Activated B cell treated with CpG ODN at 0.5 μM for 24 hours (primary cell): ENCODE measurements at regions of chr9 and their contacts with region 1.

Region 1: GRCh38 chr9:124708633-124709291 is 62.3 kb downstream of the NR6A1 start:
- DNase-seq: no peak
- ATAC-seq: no peak
- H3K4me3 Mint-ChIP-seq: no peak overlapping the region
- H3K27ac Mint-ChIP-seq: no peak overlapping the region
- H3K4me1 Mint-ChIP-seq: no peaks in the 10 kb centered on the region
- H3K27me3 Mint-ChIP-seq: no peaks in the 10 kb centered on the region
- CTCF ChIP-seq: no peak

Region 2: DNA sequence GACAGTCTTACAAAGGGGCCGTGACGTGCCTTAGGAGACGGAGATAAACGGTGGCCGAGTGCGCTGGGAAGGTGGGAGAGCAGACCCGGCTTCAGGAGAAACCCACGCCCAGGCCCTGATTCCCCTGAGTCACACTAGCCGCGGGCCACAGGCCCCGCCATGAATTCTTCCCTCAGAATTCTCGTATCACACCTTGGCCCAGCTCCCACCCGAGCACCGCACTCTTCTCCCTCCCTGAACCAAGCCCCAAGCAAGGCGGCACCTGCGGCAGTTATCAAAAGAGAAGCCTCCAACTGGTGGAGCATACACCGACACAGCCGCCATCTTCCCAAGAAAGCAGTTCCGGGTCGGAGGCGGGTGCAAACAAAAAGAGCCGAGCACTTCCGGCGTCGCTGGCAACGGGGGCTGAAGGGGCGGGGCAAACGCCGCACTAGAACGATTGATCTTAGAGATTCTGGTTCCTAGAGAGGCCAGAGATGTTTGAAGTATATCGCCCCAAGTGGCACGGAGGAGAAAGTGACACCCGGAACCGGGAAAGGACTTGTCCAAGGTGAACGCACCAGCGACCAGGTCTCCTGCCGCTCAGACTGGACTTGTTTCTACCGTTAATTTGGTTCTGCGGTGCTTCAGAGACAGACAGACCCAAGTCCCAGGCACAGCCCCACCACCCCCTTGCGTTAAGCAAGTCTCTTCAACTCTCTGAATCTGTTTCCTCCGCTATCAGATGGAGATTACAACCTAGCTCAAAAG is 293.5 kb before region 1 on chr9 and contains the start of gene PSMB7:
- CTCF ChIA-PET with region 1: no interaction called
- POLR2A ChIA-PET with region 1: no interaction called
- intact Hi-C with region 1: loop called (anchors 1 kb)
- DNase-seq: peak; percentile 91
- ATAC-seq: peak; percentile 94
- H3K4me3 Mint-ChIP-seq: peak within 1 kb of the TSS; percentile 99
- H3K27ac Mint-ChIP-seq: peak within 1 kb of the TSS; percentile 94
- H3K4me1 Mint-ChIP-seq: peaks cover 25% of the 10 kb centered on the region
- H3K27me3 Mint-ChIP-seq: no peaks in the 10 kb centered on the region
- CTCF ChIP-seq: peak; percentile 38
- total RNA-seq, gene PSMB7: 120 and 140 TPM in 2 replicates

Region 3: GRCh38 chr9:124617471-124618141 is 91.2 kb before region 1 on chr9:
- CTCF ChIA-PET with region 1: interaction called, 74 read pairs
- POLR2A ChIA-PET with region 1: no interaction called
- intact Hi-C with region 1: loop called (anchors 1 kb)
- DNase-seq: peak; percentile 47
- ATAC-seq: peak; percentile 75
- H3K4me3 Mint-ChIP-seq: no peak overlapping the region
- H3K27ac Mint-ChIP-seq: no peak overlapping the region
- H3K4me1 Mint-ChIP-seq: peaks cover 2% of the 10 kb centered on the region
- H3K27me3 Mint-ChIP-seq: no peaks in the 10 kb centered on the region
- CTCF ChIP-seq: peak; percentile 41

Region 4: GRCh38 chr9:124894741-124895170 is 186.0 kb after region 1 on chr9:
- CTCF ChIA-PET with region 1: no interaction called
- POLR2A ChIA-PET with region 1: no interaction called
- intact Hi-C with region 1: loop called (anchors 2 kb)
- DNase-seq: no peak
- ATAC-seq: peak; percentile 85
- H3K4me3 Mint-ChIP-seq: no peak overlapping the region
- H3K27ac Mint-ChIP-seq: peak overlapping the region; percentile 50
- H3K4me1 Mint-ChIP-seq: no peaks in the 10 kb centered on the region
- H3K27me3 Mint-ChIP-seq: no peaks in the 10 kb centered on the region
- CTCF ChIP-seq: no peak

Region 5: GRCh38 chr9:125374443-125375309 is 665.9 kb after region 1 on chr9:
- CTCF ChIA-PET with region 1: no interaction called
- POLR2A ChIA-PET with region 1: no interaction called
- intact Hi-C with region 1: loop called (anchors 1 kb)
- DNase-seq: peak; percentile 43
- ATAC-seq: peak; percentile 95
- H3K4me3 Mint-ChIP-seq: peak overlapping the region; percentile 32
- H3K27ac Mint-ChIP-seq: no peak overlapping the region
- H3K4me1 Mint-ChIP-seq: peaks cover 4% of the 10 kb centered on the region
- H3K27me3 Mint-ChIP-seq: peaks cover 4% of the 10 kb centered on the region
- CTCF ChIP-seq: no peak

Region 6: GRCh38 chr9:125942125-125942524 is 1233.4 kb after region 1 on chr9:
- CTCF ChIA-PET with region 1: no interaction called
- POLR2A ChIA-PET with region 1: no interaction called
- intact Hi-C with region 1: no loop called
- DNase-seq: no peak
- ATAC-seq: no peak
- H3K4me3 Mint-ChIP-seq: no peak overlapping the region
- H3K27ac Mint-ChIP-seq: no peak overlapping the region
- H3K4me1 Mint-ChIP-seq: no peaks in the 10 kb centered on the region
- H3K27me3 Mint-ChIP-seq: no peaks in the 10 kb centered on the region
- CTCF ChIP-seq: no peak